ENCODE measurements at regions of chr3 and their contacts with region 1.

Region 1: GRCh38 chr3:15185404-15185803 is 20.6 kb upstream of the CAPN7 start:
- DNase-seq: no peak
- H3K4me3 ChIP-seq: no peak overlapping the region
- H3K27ac ChIP-seq: no peak overlapping the region
- H3K4me1 ChIP-seq: no peaks in the 10 kb centered on the region
- H3K27me3 ChIP-seq: no peaks in the 10 kb centered on the region
- CTCF ChIP-seq: no peak
- POLR2A ChIP-seq: no peak

Region 2: DNA sequence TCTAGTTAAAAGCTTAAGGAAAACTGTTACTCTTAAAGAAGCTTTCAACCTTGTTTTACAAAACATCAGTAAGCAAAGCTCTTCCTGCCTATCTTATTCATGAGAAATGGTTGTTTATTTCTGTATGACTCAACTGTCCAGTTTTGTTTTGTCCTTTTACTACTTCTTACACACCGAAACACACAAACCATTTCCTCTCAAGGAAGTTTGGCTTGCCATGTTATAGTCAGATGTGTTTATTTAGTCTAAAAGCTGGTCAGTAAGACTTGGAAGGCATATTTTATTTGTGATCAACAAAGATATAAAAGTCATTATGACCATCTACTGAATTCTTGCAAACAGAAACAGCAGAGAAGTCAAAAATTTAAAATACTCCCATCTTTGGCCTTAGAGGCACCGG is 33.2 kb before region 1 on chr3:
- intact Hi-C with region 1: loop called (anchors 2 kb)
- DNase-seq: no peak
- H3K4me3 ChIP-seq: no peak overlapping the region
- H3K27ac ChIP-seq: no peak overlapping the region
- H3K4me1 ChIP-seq: no peaks in the 10 kb centered on the region
- H3K27me3 ChIP-seq: peaks cover 0 to 4% of the 10 kb centered on the region in 2 donors
- CTCF ChIP-seq: no peak
- POLR2A ChIP-seq: no peak